ENCODE measurements at regions of chr14 and their contacts with region 1.

Region 1: DNA sequence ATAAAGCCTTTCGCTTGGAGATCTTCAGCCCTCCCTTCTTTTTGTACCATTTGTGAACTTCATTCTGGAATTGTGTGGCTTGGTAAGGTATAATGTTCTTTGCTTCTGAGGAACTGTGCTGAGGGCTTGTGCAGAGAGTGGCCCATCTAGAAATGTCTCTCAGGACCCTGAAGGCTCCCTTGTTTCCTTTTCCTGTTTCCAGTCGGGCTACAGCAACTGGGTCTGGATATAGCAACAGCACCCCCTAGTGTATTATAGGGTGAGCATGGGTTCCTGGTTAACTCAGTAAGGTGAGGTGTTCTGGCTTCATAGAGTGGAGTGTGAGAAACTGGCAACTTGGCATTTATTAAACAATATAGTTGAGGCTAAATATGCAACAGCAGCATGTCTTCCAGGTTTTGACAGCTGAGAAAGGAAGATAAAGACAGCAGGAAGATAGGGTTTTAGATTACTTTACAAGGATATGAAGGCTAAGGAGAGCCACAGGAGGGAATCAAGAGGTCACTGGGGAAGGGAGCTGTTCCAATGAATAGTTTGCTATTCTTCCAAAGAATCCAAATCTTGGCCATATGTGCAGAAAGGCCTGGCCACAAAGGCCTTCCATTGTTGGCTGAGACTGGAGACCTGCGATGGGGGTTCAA is 49.1 kb upstream of the RNU6-8 start:
- DNase-seq: no peak
- ATAC-seq: peak; percentile 81 to 89
- H3K4me3 ChIP-seq: no peak overlapping the region
- H3K27ac ChIP-seq: no peak overlapping the region
- H3K4me1 ChIP-seq: peaks cover 7% of the 10 kb centered on the region
- H3K27me3 ChIP-seq: no peaks in the 10 kb centered on the region

Region 2: DNA sequence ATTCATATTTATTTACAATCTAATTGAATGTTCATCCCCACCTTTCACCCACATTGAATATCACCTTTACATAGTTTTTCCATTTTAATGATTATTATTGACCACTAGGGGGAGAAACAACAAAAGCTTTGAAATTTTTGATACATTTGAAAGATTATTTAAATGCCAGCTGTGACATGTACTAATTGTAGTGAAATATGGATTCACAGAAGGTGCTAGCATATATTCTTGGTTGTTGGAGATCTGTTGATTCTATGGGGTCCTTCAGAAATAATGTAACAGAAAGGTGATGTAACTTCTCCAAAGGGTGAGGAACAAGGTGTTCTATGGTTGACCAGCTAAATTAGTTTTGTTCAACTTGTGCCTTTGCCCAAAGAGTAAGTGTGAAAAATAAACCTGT is 741.9 kb before region 1 on chr14:
- intact Hi-C with region 1: loop called in 3 of 4 experiments (anchors 5 kb)
- DNase-seq: no peak
- ATAC-seq: no peak
- H3K4me3 ChIP-seq: no peak overlapping the region
- H3K27ac ChIP-seq: no peak overlapping the region
- H3K4me1 ChIP-seq: peaks cover 3% of the 10 kb centered on the region
- H3K27me3 ChIP-seq: no peaks in the 10 kb centered on the region

Region 3: DNA sequence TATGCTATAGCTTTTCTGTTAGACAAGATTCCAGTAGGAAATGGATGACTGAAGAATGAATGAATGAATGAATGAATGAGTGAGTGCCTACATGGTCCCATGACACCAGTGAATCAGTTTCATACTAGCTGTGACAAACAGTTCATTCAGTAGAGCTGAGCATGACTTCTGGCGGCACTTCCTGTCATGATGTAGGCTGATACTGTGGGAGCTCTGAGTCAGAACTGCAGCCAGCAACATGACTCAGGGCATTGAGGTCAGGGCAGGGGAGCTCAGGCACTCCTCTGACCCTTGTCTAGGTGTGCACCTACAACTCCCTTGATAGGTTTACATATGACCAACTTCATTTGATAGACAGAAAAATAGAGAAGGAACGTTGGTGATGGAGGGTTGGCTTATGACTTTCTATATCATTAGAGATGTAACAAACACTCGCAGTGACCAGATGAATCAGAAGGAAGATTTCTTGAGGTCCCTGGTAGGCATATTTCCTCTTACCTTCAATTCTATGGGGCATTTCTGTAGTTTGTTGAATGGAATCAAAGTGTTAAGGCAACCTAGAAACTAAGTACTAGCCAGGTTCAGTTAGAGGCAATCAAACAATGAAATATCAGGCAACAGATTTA is 314.3 kb before region 1 on chr14:
- intact Hi-C with region 1: loop called (anchors 5 to 10 kb)
- DNase-seq: peak in 1 of 3 donors; percentile 55
- ATAC-seq: peak; percentile 67 to 90
- H3K4me3 ChIP-seq: no peak overlapping the region
- H3K27ac ChIP-seq: no peak overlapping the region
- H3K4me1 ChIP-seq: peaks cover 2% of the 10 kb centered on the region
- H3K27me3 ChIP-seq: no peaks in the 10 kb centered on the region

Region 4: DNA sequence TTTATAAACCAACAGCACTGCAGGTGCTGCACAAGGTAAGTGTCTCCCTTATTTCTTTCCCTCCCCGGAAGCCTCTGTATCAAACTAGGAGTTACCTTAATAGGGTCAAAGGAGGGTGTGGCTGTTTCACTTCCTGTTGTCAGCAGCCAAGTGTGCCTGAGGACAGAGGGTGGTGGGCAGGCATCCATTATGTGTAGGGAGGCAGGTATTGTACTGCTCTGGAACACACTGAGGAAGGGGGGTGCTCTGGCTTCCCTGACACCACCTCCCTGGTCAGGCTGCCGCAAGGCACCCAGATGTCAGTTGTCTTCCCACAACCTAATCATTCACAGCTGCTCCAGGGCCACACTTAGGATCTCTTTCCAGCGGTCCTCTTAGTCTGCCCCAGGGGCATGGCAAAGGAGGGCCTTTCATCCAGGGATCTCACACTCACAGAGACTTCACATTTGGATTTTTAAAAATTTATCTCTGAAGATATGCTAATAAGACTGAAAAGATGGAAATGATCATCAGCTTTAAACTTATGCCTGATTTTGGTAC is 307.0 kb before region 1 on chr14:
- intact Hi-C with region 1: loop called in 1 of 4 experiments (anchors 5 kb)
- DNase-seq: no peak
- ATAC-seq: no peak
- H3K4me3 ChIP-seq: no peak overlapping the region
- H3K27ac ChIP-seq: no peak overlapping the region
- H3K4me1 ChIP-seq: no peaks in the 10 kb centered on the region
- H3K27me3 ChIP-seq: no peaks in the 10 kb centered on the region

Region 5: DNA sequence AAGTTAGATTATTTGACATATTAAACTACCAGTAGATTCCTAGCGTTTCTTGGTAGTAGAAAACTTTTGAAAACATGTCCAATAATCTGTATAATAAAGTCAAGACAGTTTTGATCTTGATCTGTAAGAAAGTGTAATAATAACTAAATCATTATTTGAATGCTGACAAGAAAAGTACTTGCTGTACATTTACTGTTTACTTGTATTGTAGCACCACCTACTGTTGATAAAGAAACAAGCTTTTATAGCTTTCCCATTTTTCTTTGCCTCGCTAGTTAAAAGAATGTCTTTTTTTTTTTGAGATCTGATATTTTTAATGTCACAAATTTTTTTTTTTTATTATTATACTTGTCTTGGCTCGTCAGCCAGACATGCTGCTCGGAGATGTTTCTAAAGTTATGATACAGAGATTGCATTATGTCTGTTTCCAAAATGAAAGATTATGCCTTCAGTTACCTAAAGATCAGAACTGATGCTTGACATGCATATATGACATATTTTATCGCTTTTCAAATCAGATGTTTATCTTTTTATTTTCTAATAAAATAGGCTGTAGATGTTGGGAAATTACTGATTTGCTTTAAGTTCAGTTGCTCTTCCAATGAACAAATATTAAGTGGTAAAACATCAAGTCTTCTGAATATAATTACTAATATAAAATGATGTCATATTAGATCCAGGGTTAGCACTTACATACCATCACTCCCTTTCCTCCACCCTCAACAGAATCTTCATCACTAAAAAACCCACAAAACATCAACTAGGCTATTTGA is 217.4 kb after region 1 on chr14:
- intact Hi-C with region 1: loop called in 2 of 4 experiments (anchors 5 to 10 kb)
- DNase-seq: no peak
- ATAC-seq: peak; percentile 59 to 60
- H3K4me3 ChIP-seq: no peak overlapping the region
- H3K27ac ChIP-seq: no peak overlapping the region
- H3K4me1 ChIP-seq: peaks cover 4% of the 10 kb centered on the region
- H3K27me3 ChIP-seq: no peaks in the 10 kb centered on the region